Adrenal gland (tissue), 19 donors: ENCODE measurements at regions of chr15 and their contacts with region 1.

Region 1: GRCh38 chr15:29821416-29822131 is 694 bp downstream of the TJP1 start:
- DNase-seq: peak; percentile 74 to 89 (median 82)
- H3K4me3 ChIP-seq: peak overlapping the region; percentile 48 to 98 (median 89)
- H3K27ac ChIP-seq: peak overlapping the region; percentile 60 to 99 (median 97)
- H3K4me1 ChIP-seq: peaks cover 0 to 23% of the 10 kb centered on the region in 2 donors
- H3K27me3 ChIP-seq: no peaks in the 10 kb centered on the region
- CTCF ChIP-seq: peak in 2 of 6 experiments; percentile 21 to 38
- POLR2A ChIP-seq: peak; percentile 40 to 83

Region 2: DNA sequence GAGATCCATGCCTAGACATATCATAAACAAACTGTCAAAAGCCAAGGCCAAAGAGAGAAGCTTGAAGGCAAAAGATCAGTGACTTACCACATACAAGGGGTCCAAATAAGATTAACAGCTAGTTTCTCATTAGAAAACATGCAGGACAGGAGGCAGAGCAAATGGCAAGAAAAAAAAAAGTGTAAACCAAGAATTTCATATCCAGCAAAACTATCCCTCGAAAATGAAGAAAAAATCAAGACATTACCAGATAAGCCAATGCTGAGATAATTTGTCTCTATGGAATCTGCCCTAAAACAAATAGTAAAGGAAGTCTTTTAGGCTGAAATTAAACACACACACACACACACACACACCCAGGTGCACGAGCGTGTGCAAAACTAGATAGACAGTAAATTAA is 452.3 kb before region 1 on chr15:
- intact Hi-C with region 1: no loop called
- DNase-seq: no peak
- H3K4me3 ChIP-seq: no peak overlapping the region
- H3K27ac ChIP-seq: no peak overlapping the region
- H3K4me1 ChIP-seq: no peaks in the 10 kb centered on the region
- H3K27me3 ChIP-seq: no peaks in the 10 kb centered on the region
- CTCF ChIP-seq: no peak
- POLR2A ChIP-seq: no peak

Region 3: DNA sequence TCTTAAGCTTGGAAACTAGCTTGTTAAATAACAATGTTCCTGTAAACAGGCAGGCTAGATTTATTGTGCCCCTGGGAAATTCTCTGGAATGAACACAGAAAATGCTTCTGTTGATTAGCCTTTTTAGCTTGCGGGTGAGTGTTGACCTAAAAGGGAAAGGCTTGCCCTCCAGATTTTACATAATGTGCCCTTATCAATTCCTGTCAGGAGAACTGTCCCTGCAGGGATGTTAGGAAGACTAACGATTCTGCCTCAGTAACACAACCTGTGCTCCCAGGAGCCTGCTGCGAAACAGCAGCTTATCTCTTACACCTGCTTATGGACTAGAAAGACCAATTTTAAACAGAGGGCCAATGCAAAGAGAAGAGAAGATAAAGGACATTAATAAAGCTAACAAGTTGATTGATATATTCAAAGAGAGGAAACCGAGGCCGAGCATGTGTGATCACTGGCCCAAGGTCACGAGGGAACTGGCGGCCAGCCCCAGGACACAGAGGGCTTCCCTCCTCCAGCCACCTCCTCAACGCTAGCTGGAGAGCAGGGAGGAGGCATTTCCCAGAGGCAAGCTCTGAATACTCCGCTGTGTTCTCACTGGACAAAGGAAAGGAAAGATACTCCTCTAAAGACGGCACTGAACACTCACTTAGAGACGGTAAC is 49.0 kb after region 1 on chr15:
- intact Hi-C with region 1: loop called in 1 of 2 experiments (anchors 10 kb)
- DNase-seq: peak; percentile 44 to 84 (median 59)
- H3K4me3 ChIP-seq: peak overlapping the region in 1 of 4 donors; percentile 1
- H3K27ac ChIP-seq: peak overlapping the region in 3 of 5 donors; percentile 13 to 63 (median 45)
- H3K4me1 ChIP-seq: peaks cover 5 to 30% of the 10 kb centered on the region in 2 donors
- H3K27me3 ChIP-seq: no peaks in the 10 kb centered on the region
- CTCF ChIP-seq: no peak
- POLR2A ChIP-seq: no peak